GM23248 (cell line): ENCODE measurements at regions of chr7 and their contacts with region 1.

Region 1: GRCh38 chr7:81457852-81458522 is 311.9 kb downstream of the HGF start:
- DNase-seq: peak; percentile 77
- H3K4me3 ChIP-seq: no peak overlapping the region
- H3K27ac ChIP-seq: no peak overlapping the region
- H3K4me1 ChIP-seq: peaks cover 7% of the 10 kb centered on the region; the same call in 1 of the 2 replicates
- H3K27me3 ChIP-seq: no peaks in the 10 kb centered on the region

Region 2: DNA sequence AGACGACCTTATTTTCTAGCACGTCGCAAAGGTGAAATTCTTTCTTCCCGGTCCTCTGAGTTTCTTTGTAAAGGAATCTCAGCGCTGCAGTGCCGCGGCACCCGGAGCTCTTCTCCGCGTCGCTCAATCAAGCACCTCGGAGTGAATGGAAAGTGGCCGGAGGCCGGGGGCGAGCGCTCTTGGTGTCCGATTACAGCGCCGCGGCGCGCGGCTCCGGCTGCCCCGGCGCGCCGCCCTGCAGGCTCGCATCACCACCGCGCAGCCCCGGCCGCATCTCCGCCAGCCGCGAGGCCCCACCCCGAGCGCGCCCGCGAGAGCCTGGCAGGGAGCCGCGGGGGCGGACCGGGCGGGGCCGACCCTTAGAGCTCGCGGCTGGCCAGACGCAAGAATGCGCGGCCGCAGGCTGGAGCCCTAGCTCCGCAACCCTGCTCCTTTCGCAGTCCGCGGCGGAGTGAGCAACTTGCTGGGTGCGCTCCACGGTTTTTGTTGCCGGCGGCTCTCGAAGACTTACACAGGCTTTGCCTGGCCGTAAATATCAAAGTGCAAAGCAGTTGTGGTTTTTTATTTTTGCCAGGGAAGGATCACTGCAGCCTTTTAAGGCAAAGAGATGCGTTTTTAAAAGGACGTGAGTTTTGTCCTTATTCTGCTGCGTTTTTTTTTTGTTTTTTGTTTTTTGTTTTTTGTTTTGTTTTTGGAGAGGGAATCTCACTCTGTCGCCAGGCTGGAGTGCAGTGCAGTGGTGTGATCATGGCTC is 538.9 kb before region 1 on chr7 and contains the start of gene SEMA3C:
- in situ Hi-C with region 1: loop called (anchors 5 kb)
- DNase-seq: peak; percentile 99
- H3K4me3 ChIP-seq: peak within 1 kb of the TSS; percentile 99
- H3K27ac ChIP-seq: peak within 1 kb of the TSS; percentile 60
- H3K4me1 ChIP-seq: peaks cover 24% of the 10 kb centered on the region
- H3K27me3 ChIP-seq: no peaks in the 10 kb centered on the region
- total RNA-seq, gene SEMA3C: 612 and 756 TPM in 2 replicates

Region 3: GRCh38 chr7:81776948-81777630 is 319.1 kb after region 1 on chr7:
- in situ Hi-C with region 1: no loop called
- DNase-seq: no peak
- H3K4me3 ChIP-seq: no peak overlapping the region
- H3K27ac ChIP-seq: no peak overlapping the region
- H3K4me1 ChIP-seq: no peaks in the 10 kb centered on the region
- H3K27me3 ChIP-seq: no peaks in the 10 kb centered on the region

Region 4: GRCh38 chr7:82131215-82131614 is 673.2 kb after region 1 on chr7:
- in situ Hi-C with region 1: no loop called
- DNase-seq: peak; percentile 40
- H3K4me3 ChIP-seq: no peak overlapping the region
- H3K27ac ChIP-seq: no peak overlapping the region
- H3K4me1 ChIP-seq: no peaks in the 10 kb centered on the region
- H3K27me3 ChIP-seq: no peaks in the 10 kb centered on the region